ENCODE measurements at regions of chr2 and their contacts with region 1.

Region 1: GRCh38 chr2:178863856-178864620 is 56.8 kb upstream of the TTN start:
- DNase-seq: peak; percentile 71 to 87
- ATAC-seq: peak; percentile 79 to 93 (median 88)
- H3K4me3 ChIP-seq: peak overlapping the region in 6 of 10 donors; percentile 17 to 34 (median 28)
- H3K27ac ChIP-seq: peak overlapping the region; percentile 83 to 97 (median 90)
- H3K4me1 ChIP-seq: peaks cover 10 to 76% (median 52%) of the 10 kb centered on the region in 9 donors
- H3K27me3 ChIP-seq: no peaks in the 10 kb centered on the region
- CTCF ChIP-seq: no peak

Region 2: DNA sequence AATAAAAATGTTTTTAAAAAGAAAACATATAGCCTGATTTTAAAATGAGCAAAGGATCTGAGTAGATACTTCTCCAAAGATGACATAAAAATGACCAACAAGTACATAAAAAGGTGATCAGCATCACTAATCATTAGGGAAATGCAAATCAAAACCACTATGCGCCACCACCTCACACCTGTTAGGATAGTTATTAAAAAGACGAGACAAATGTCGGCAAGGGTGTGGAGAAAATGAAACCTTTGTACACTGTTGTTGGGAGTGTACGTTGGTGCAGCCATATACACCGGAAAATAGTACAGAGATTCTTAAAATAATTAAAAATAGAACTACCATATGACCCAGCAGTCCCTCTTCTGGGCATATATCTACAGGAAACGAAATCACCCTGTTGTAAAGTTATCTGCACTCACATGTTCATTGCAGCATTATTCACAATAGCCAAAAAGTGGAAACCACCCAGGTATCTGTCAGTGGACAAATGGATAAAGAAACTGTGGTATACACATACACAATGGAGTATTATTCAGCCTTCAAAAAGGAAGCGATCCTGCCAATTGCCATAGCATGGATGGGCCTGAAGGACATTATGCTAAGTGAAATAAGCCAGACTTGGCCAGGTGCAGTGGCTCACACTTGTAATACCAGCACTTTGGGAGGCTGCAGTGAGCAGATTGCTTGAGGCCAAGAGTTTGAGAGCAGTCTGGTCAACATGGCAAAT is 504.7 kb before region 1 on chr2:
- intact Hi-C with region 1: no loop called
- DNase-seq: no peak
- ATAC-seq: no peak
- H3K4me3 ChIP-seq: no peak overlapping the region
- H3K27ac ChIP-seq: no peak overlapping the region
- H3K4me1 ChIP-seq: no peaks in the 10 kb centered on the region
- H3K27me3 ChIP-seq: no peaks in the 10 kb centered on the region
- CTCF ChIP-seq: no peak

Region 3: DNA sequence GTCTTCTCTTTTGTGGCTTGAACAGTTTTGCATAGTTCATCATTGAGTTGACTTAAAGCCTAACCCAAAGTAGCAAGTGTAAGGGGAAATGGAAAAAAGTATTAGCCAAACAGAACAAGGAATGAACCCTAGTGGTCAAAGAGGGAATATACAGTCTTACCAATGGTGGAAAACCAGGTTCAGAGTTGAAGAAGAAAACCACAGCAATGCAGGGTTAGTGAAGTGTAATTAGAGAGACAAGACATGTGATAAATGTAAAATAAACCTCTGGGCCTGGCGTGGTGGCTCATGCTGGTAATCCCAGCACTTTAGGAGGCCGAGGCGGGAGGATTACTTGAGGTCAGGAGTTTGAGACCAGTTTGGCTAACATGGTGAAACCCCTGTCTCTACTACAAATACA is 59.2 kb before region 1 on chr2:
- intact Hi-C with region 1: loop called in 4 of 10 experiments (anchors 2 to 10 kb)
- DNase-seq: no peak
- ATAC-seq: peak in 4 of 8 donors; percentile 2 to 21 (median 8)
- H3K4me3 ChIP-seq: peak overlapping the region; percentile 14 to 62 (median 46)
- H3K27ac ChIP-seq: peak overlapping the region in 9 of 10 donors; percentile 41 to 95 (median 90)
- H3K4me1 ChIP-seq: peaks cover 0 to 4% (median 0%) of the 10 kb centered on the region in 9 donors
- H3K27me3 ChIP-seq: no peaks in the 10 kb centered on the region
- CTCF ChIP-seq: peak; percentile 25 to 63 (median 54)

Region 4: GRCh38 chr2:178829299-178829960 is 34.6 kb before region 1 on chr2:
- intact Hi-C with region 1: loop called in 1 of 10 experiments (anchors 2 kb)
- DNase-seq: no peak
- ATAC-seq: peak in 7 of 8 donors; percentile 31 to 63 (median 51)
- H3K4me3 ChIP-seq: peak overlapping the region in 1 of 10 donors; percentile 11
- H3K27ac ChIP-seq: peak overlapping the region in 7 of 10 donors; percentile 27 to 79 (median 53)
- H3K4me1 ChIP-seq: peaks cover 2 to 48% (median 31%) of the 10 kb centered on the region in 9 donors
- H3K27me3 ChIP-seq: no peaks in the 10 kb centered on the region
- CTCF ChIP-seq: no peak